MCF 10A (cell line): ENCODE measurements at regions of chr13 and their contacts with region 1.

Region 1: GRCh38 chr13:31236211-31236786 is 36.5 kb downstream of the B3GLCT start:
- DNase-seq: peak; percentile 53
- H3K4me3 Mint-ChIP-seq: no peak overlapping the region
- H3K27ac Mint-ChIP-seq: no peak overlapping the region
- H3K4me1 Mint-ChIP-seq: no peaks in the 10 kb centered on the region
- H3K27me3 Mint-ChIP-seq: no peaks in the 10 kb centered on the region
- CTCF ChIP-seq: peak; percentile 42

Region 2: GRCh38 chr13:31184981-31185685 is 51.2 kb before region 1 on chr13:
- CTCF ChIA-PET with region 1: no interaction called
- POLR2A ChIA-PET with region 1: no interaction called
- intact Hi-C with region 1: no loop called
- DNase-seq: no peak
- H3K4me3 Mint-ChIP-seq: no peak overlapping the region
- H3K27ac Mint-ChIP-seq: no peak overlapping the region
- H3K4me1 Mint-ChIP-seq: no peaks in the 10 kb centered on the region
- H3K27me3 Mint-ChIP-seq: peaks cover 10% of the 10 kb centered on the region
- CTCF ChIP-seq: no peak

Region 3: DNA sequence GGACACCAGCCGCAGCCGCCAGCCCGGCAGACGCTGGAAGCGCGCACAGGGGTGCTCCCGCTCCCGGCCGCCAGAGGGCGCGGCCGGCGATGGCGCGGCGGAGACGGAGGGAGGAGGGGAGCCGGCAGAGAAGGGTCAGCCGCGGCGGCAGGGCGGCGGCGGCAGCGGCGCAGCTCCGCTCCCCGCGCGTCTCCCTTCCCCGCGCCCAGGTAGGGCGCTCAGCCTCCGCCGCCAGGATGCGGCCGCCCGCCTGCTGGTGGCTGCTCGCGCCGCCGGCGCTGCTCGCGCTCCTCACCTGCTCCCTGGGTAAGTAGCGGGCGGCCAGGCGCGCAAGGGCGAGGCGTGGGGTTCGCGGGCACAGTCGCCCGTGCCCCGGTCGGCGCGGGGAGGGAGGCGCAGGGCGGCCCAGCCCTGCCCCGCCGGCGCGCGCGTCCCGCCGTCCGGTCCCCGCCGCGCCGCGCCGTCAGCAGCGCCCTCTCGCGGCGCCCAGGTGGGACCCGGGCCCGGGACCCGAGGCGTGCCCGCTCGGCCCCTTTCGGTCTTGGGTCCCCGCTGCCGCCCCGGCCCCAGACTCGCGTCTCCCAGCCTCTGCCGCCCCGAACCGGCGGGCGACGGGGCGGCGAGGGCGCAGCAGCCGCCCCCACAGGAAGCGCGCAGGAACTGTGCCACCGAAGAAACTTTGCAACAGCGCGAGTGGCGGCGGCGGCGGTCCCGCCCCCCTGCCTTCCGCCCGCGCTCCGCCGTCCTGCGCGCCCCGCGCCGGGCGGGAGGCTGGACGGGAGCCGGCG is 36.3 kb before region 1 on chr13 and contains the start of gene B3GLCT:
- CTCF ChIA-PET with region 1: interaction called, 10 read pairs
- POLR2A ChIA-PET with region 1: no interaction called
- intact Hi-C with region 1: no loop called
- DNase-seq: peak; percentile 77
- H3K4me3 Mint-ChIP-seq: peak within 1 kb of the TSS; percentile 80
- H3K27ac Mint-ChIP-seq: peak within 1 kb of the TSS; percentile 66
- H3K4me1 Mint-ChIP-seq: peaks cover 30% of the 10 kb centered on the region
- H3K27me3 Mint-ChIP-seq: no peaks in the 10 kb centered on the region
- CTCF ChIP-seq: peak; percentile 89
- total RNA-seq, gene B3GLCT: 1.7 and 1.9 TPM in 2 replicates

Region 4: DNA sequence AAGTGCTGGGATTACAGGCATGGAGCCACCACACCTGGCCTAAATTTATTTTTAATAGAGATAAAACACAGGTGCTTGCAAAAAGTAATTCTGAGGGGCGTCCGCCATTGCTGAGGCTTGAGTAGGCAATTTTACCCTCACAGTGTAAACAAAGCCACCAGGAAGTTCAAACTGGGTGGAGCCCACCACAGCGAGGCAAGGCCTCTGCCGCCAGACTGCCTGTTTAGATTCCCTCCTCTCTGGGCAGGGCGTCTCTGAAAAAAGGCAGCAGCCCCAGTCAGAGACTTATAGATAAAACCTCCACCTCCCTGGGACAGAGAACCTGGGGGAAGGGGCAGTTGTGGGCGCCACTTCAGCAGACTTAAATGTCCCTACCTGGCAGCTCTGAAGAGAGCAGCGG is 14.1 kb after region 1 on chr13:
- CTCF ChIA-PET with region 1: interaction called, 65 read pairs
- POLR2A ChIA-PET with region 1: interaction called, 3 read pairs
- intact Hi-C with region 1: no loop called
- DNase-seq: no peak
- H3K4me3 Mint-ChIP-seq: no peak overlapping the region
- H3K27ac Mint-ChIP-seq: no peak overlapping the region
- H3K4me1 Mint-ChIP-seq: no peaks in the 10 kb centered on the region
- H3K27me3 Mint-ChIP-seq: no peaks in the 10 kb centered on the region
- CTCF ChIP-seq: no peak

Region 5: DNA sequence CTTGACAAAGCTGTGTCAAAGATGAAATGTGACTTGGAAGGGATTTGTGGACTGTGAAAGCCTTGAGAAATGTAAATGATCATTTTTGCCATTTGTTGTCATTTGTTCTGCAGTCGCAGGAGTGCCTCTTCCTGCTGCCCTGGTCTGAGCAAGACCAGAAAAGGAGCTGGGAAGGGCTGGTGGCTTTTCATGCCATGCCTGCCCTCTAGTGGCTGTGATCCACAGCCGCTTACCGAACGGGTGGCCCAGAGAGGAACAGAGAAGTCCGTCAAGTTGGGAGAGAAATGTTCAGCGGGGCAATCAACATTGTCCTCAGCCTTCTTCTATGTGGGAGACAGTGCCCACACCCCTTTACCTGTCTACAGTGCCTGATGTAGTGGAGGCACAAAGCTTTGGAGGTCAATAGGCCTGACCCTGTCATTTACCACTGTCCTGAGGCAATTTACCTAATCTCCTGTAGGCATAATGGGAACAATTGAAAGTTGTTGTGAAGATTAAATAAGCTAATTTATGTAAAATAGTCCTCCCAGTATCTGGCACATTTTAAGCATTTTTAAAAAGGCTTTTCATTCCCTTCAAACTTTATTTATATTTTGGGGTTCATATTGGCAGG is 187.9 kb after region 1 on chr13:
- CTCF ChIA-PET with region 1: interaction called, 378 read pairs
- POLR2A ChIA-PET with region 1: interaction called, 9 read pairs
- intact Hi-C with region 1: loop called (anchors 1 kb)
- DNase-seq: peak; percentile 85
- H3K4me3 Mint-ChIP-seq: no peak overlapping the region
- H3K27ac Mint-ChIP-seq: no peak overlapping the region
- H3K4me1 Mint-ChIP-seq: peaks cover 10% of the 10 kb centered on the region
- H3K27me3 Mint-ChIP-seq: peaks cover 15% of the 10 kb centered on the region
- CTCF ChIP-seq: peak; percentile 80

Region 6: DNA sequence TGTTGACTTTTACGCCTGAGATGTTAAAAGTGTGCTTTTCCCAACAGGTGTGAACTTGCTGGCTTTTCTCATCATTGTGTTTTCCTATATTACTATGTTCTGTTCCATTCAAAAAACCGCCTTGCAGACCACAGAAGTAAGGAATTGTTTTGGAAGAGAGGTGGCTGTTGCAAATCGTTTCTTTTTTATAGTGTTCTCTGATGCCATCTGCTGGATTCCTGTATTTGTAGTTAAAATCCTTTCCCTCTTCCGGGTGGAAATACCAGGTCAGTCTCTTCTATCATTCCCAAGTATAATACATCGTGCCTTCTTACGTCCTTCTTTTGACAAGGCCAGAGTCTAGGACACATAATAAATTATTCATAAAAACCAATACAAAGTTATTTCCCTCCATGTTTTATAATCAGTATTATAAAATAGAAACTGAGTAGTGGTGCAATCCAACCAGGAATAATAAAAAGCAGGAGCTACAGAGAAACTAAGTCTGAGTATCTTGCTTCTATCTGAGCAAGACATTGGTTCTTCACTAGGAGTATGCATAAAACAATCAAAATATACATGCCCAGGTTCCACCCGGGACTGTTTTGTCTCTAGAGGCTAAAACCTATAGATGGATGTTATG is 561.0 kb after region 1 on chr13:
- CTCF ChIA-PET with region 1: interaction called, 6 read pairs
- POLR2A ChIA-PET with region 1: no interaction called
- intact Hi-C with region 1: loop called (anchors 1 kb)
- DNase-seq: peak; percentile 54
- H3K4me3 Mint-ChIP-seq: no peak overlapping the region
- H3K27ac Mint-ChIP-seq: no peak overlapping the region
- H3K4me1 Mint-ChIP-seq: peaks cover 13% of the 10 kb centered on the region
- H3K27me3 Mint-ChIP-seq: peaks cover 12% of the 10 kb centered on the region
- CTCF ChIP-seq: peak; percentile 39